Activated CD4-positive, alpha-beta T cell treated with anti-CD3 and anti-CD28 coated beads for 36 hours (primary cell): ENCODE measurements at regions of chr5 and their contacts with region 1.

Region 1: DNA sequence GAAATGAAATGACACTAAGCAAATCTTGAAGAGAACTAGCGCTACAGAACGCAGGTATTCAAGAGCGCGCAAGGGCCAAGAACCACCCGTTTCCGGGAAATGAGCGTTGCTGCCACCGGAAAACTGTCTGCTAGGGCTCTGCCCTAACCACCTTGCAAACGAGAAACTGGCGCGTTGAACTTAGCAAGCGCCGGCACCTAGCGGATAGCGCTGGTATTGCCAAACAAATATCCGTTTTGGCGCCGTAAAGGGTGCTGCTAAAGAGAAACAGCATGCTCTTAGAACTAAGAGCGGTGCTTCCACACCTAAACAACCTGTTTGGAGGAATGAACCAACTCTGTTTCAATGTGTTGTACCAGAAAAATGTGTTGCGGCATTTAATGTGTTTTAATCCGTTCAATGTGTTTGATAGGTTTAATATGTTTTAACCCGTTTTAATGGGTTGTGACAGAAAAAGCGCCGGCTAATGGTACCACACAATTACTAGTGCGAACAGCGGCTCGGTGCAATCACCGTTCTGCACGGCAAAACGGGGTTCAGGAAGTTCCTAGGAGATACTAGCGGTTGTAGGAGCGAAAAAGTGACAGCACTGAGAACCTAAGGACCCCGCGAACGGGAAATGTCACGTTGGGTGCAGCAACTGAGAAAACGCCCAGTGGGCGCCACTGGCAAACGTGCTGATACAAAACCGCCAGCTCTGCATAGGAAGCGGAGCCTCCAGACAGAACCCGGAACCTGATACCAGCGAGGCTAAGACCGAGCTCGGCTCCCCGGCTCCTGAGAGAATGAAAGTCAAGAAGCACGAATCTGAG is at the start of gene ANXA2R:
- DNase-seq: peak; percentile 96
- ATAC-seq: peak; percentile 56
- H3K4me3 Mint-ChIP-seq: peak within 1 kb of the TSS; percentile 81
- H3K27ac Mint-ChIP-seq: peak within 1 kb of the TSS; percentile 94
- H3K4me1 Mint-ChIP-seq: peaks cover 39% of the 10 kb centered on the region
- H3K27me3 Mint-ChIP-seq: no peaks in the 10 kb centered on the region
- total RNA-seq, gene ANXA2R: 3.2 to 4.6 TPM

Region 2: GRCh38 chr5:41748631-41749030 is 1291.9 kb before region 1 on chr5:
- CTCF ChIA-PET with region 1: no interaction called
- POLR2A ChIA-PET with region 1: no interaction called
- intact Hi-C with region 1: loop called in 1 of 2 experiments (anchors 10 kb)
- DNase-seq: peak; percentile 59
- ATAC-seq: peak; percentile 94
- H3K4me3 Mint-ChIP-seq: no peak overlapping the region
- H3K27ac Mint-ChIP-seq: no peak overlapping the region
- H3K4me1 Mint-ChIP-seq: peaks cover 28% of the 10 kb centered on the region
- H3K27me3 Mint-ChIP-seq: no peaks in the 10 kb centered on the region

Region 3: GRCh38 chr5:42756606-42757601 is 283.6 kb before region 1 on chr5 and contains the start of gene CCDC152:
- CTCF ChIA-PET with region 1: no interaction called
- POLR2A ChIA-PET with region 1: no interaction called
- intact Hi-C with region 1: loop called in 1 of 2 experiments (anchors 10 kb)
- DNase-seq: peak; percentile 78
- ATAC-seq: peak; percentile 99
- H3K4me3 Mint-ChIP-seq: peak within 1 kb of the TSS; percentile 80
- H3K27ac Mint-ChIP-seq: peak within 1 kb of the TSS; percentile 37
- H3K4me1 Mint-ChIP-seq: peaks cover 6% of the 10 kb centered on the region
- H3K27me3 Mint-ChIP-seq: peaks cover 6% of the 10 kb centered on the region
- total RNA-seq, gene CCDC152: 12.2 to 13.2 TPM

Region 4: GRCh38 chr5:42994246-42995151 is 46.0 kb before region 1 on chr5:
- CTCF ChIA-PET with region 1: interaction called, 132 read pairs
- POLR2A ChIA-PET with region 1: interaction called, 12 read pairs
- intact Hi-C with region 1: loop called (anchors 1 kb)
- DNase-seq: peak; percentile 93
- ATAC-seq: peak; percentile 67
- H3K4me3 Mint-ChIP-seq: peak overlapping the region; percentile 98
- H3K27ac Mint-ChIP-seq: peak overlapping the region; percentile 100
- H3K4me1 Mint-ChIP-seq: peaks cover 25% of the 10 kb centered on the region
- H3K27me3 Mint-ChIP-seq: no peaks in the 10 kb centered on the region

Region 5: DNA sequence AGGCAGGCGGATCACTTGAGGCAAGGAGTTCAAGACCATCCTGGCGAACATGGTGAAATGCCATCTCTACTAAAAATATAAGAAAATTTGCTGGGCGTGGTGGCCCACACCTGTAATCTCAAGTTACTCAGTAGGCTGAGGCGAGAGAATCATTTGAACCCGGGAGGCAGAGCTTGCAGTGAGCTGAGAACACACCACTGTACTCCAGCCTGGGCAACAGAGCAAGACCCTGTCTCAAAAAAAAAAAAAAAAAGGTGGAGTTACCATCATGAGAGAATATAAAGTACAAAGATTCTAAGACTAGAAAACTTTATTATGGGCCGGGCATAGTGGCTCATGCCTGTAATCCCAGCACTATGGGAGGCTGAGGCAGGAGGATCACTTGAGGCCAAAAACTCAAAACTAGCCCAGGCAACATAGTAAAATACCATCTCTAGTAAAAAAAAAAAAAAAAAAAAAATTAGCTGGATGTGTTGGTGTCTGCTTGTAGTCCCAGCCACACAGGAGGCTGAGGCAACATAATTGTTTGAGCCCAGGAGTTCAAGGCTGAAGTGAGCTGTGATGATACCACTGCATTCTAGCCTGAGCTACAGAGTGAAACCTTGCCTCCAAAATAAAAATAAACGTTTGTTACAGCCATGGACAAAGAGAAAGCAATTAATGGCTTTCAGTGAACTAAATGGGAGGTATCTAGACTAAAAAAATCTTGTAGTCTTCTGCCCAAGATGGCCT is 13.3 kb before region 1 on chr5:
- CTCF ChIA-PET with region 1: interaction called, 158 read pairs
- POLR2A ChIA-PET with region 1: interaction called, 3 read pairs
- intact Hi-C with region 1: loop called in 1 of 2 experiments (anchors 1 kb)
- DNase-seq: no peak
- ATAC-seq: no peak
- H3K4me3 Mint-ChIP-seq: no peak overlapping the region
- H3K27ac Mint-ChIP-seq: no peak overlapping the region
- H3K4me1 Mint-ChIP-seq: peaks cover 32% of the 10 kb centered on the region
- H3K27me3 Mint-ChIP-seq: no peaks in the 10 kb centered on the region

Region 6: GRCh38 chr5:43120720-43121564 is 80.4 kb after region 1 on chr5 and contains the start of gene ZNF131:
- CTCF ChIA-PET with region 1: interaction called, 12 read pairs
- POLR2A ChIA-PET with region 1: interaction called, 4 read pairs
- intact Hi-C with region 1: loop called in 1 of 2 experiments (anchors 1 kb)
- DNase-seq: peak; percentile 98
- ATAC-seq: peak; percentile 93
- H3K4me3 Mint-ChIP-seq: peak within 1 kb of the TSS; percentile 94
- H3K27ac Mint-ChIP-seq: peak within 1 kb of the TSS; percentile 94
- H3K4me1 Mint-ChIP-seq: peaks cover 35% of the 10 kb centered on the region
- H3K27me3 Mint-ChIP-seq: no peaks in the 10 kb centered on the region
- total RNA-seq, gene ZNF131: 30.9 to 33.4 TPM

Region 7: GRCh38 chr5:43556857-43557542 is 516.5 kb after region 1 on chr5 and contains the start of gene PAIP1:
- CTCF ChIA-PET with region 1: no interaction called
- POLR2A ChIA-PET with region 1: no interaction called
- intact Hi-C with region 1: no loop called
- DNase-seq: peak; percentile 91
- ATAC-seq: peak; percentile 87
- H3K4me3 Mint-ChIP-seq: peak within 1 kb of the TSS; percentile 88
- H3K27ac Mint-ChIP-seq: peak within 1 kb of the TSS; percentile 99
- H3K4me1 Mint-ChIP-seq: peaks cover 18% of the 10 kb centered on the region
- H3K27me3 Mint-ChIP-seq: peaks cover 2% of the 10 kb centered on the region
- total RNA-seq, gene PAIP1: 51.7 to 55.1 TPM